Psoas muscle (tissue), 8 donors: ENCODE measurements at regions of chr6 and their contacts with region 1.

Region 1: DNA sequence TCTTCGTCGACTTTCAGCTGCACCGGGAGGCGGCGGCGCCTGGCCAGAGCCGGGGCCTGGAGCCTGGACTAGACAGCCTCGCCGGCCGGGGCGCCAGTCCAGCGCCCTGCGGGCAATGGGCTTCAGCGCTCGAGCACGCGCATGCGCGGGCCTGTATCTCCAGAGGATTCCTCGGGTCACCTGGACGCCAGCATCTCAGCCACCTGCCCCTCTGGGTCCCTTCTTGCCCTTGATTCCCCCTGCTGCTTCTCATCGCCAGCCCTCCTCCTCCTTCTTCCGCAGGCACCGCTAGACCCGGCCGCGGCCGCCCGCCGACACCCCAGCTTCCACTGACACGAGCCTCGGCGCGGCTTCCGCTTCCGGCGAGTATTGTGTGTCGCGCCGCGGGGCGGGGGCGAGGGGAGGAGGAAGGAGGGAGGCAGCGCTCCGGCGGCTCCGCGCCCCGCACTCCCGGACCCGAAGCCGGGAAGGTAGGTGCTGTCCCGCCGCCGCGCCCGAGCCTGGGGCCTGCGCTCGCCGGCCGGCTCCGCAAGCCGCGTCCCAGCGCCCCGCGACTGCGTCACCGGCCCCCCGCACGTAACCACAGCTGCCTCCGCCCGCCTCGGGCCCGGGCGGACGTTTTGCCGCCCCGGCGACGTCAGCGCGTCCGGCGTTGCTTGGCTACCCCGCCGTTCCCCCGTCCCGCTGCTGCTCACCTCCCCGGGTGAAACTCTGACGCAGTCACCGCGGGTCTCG is at the start of gene TRIM39:
- DNase-seq: peak; percentile 91 to 93
- ATAC-seq: peak; percentile 88 to 93 (median 89)
- H3K4me3 ChIP-seq: peak within 1 kb of the TSS; percentile 94
- H3K27ac ChIP-seq: peak within 1 kb of the TSS; percentile 99
- H3K4me1 ChIP-seq: peaks cover 18% of the 10 kb centered on the region
- H3K27me3 ChIP-seq: no peaks in the 10 kb centered on the region
- CTCF ChIP-seq: no peak
- total RNA-seq, gene TRIM39: 7.4 to 16.7 (median 10.0) TPM

Region 2: GRCh38 chr6:30212865-30213666 is 113.6 kb before region 1 on chr6 and contains the start of gene TRIM26:
- intact Hi-C with region 1: loop called (anchors 5 to 10 kb)
- DNase-seq: peak; percentile 95 to 98
- ATAC-seq: peak; percentile 97
- H3K4me3 ChIP-seq: peak within 1 kb of the TSS; percentile 74
- H3K27ac ChIP-seq: peak within 1 kb of the TSS; percentile 98
- H3K4me1 ChIP-seq: peaks cover 19% of the 10 kb centered on the region
- H3K27me3 ChIP-seq: no peaks in the 10 kb centered on the region
- CTCF ChIP-seq: no peak
- total RNA-seq, gene TRIM26: 13.2 to 18.1 (median 14.8) TPM

Region 3: GRCh38 chr6:30219244-30219643 is 107.4 kb before region 1 on chr6:
- intact Hi-C with region 1: loop called (anchors 5 to 10 kb)
- DNase-seq: no peak
- ATAC-seq: peak; percentile 58 to 66 (median 62)
- H3K4me3 ChIP-seq: no peak overlapping the region
- H3K27ac ChIP-seq: no peak overlapping the region
- H3K4me1 ChIP-seq: no peaks in the 10 kb centered on the region
- H3K27me3 ChIP-seq: no peaks in the 10 kb centered on the region
- CTCF ChIP-seq: peak; percentile 70

Region 4: DNA sequence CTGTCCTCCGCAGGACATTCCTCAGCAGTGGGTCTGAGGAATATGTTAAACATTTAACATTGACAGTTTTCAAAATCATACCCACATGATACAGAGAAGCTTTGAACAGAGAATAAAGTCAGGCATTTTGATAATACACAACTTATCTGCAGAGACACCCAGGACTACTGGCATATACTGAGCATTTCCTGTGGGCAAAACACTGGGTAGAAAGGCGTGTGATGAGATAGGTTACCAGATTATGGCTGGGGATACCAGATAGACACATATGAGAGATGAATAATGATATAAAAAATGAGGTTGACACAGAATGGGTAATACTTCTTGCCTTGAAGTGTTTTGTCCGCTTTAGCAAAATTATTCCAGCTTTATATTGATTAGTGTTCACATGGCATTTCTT is 82.1 kb before region 1 on chr6:
- intact Hi-C with region 1: no loop called
- DNase-seq: no peak
- ATAC-seq: no peak
- H3K4me3 ChIP-seq: no peak overlapping the region
- H3K27ac ChIP-seq: no peak overlapping the region
- H3K4me1 ChIP-seq: no peaks in the 10 kb centered on the region
- H3K27me3 ChIP-seq: no peaks in the 10 kb centered on the region
- CTCF ChIP-seq: no peak

Region 5: GRCh38 chr6:30349421-30350177 is 22.9 kb after region 1 on chr6:
- intact Hi-C with region 1: no loop called
- DNase-seq: no peak
- ATAC-seq: no peak
- H3K4me3 ChIP-seq: no peak overlapping the region
- H3K27ac ChIP-seq: no peak overlapping the region
- H3K4me1 ChIP-seq: peaks cover 6% of the 10 kb centered on the region
- H3K27me3 ChIP-seq: no peaks in the 10 kb centered on the region
- CTCF ChIP-seq: no peak